GM18951 (cell line): ENCODE measurements at regions of chr1 and their contacts with region 1.

Region 1: DNA sequence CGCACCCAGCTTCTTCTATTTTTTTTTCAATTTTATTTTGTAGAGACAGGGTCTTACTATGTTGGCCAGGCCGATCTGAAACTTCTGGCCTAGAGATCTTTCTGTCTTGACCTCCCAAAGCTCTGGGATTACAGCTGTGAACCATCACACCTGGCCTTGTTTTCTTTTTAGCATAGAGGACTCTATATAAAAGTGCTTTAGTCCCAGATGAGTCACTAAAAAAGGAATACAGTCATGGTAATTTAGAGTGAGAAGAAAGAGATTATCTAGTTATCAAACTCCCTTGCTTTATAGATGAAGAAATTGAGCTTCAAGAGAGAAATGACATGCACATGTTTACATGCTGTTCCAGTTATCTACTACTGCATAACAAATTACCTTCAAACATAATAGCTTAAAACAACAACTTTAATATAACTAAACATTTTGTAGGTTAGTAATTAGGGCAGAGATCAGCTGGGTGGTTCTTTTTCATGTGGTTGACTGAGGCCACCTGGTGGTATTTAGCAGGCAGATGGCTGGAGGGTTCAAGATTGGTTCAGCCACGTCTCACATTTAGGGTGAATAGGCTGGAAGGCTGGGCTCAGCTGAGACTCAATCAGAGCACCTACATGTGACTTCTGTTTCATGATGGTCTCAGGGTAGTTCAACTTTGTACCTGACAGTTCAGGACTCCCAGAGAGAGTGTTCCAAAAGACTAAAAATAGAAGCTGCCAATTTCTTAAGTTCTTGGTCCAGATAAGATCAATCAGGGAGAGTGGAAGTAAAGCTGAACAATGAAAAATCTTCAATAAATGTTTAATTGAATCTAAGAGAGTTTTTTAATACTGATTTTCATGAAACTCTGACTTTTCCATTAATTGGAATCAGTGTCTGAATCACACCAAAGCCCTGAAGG is 16.9 kb upstream of the MTF2 start:
- POLR2A ChIP-seq: no peak

Region 2: GRCh38 chr1:93021539-93022134 is 40.5 kb before region 1 on chr1:
- in situ Hi-C with region 1: loop called (anchors 5 kb)
- POLR2A ChIP-seq: no peak